Naive thymus-derived CD4-positive, alpha-beta T cell (primary cell): ENCODE measurements at regions of chr9 and their contacts with region 1.

Region 1: DNA sequence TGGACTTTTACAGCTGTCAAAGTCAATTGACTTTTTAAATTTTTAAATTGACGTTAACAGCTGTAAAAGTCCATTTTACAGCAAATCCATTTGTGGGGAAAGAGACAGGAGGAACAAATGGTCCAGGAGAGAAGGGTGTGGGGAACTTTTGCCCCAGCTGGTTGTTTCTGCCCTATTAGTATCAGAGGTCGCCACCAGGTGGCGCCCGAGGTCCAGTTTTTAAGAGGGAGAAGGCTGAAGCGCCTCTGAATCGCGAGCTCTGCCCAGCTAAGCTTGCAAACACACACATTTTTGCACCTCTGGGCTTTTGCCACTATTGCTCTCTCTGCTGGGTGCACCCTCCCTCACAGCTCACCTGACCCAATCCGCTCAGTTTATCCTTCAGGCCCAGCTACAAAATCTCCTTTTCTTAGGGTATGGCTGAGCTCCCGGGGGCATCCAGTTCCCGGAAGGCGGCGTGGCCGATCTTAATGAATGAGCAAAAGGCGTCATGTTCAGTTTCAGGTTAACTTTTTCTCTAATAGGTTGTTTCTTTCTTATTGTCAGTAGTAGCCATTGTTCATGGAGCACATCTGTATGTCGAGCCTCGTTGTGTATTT is 6.3 kb upstream of the TTLL11 start:
- DNase-seq: peak; percentile 54 to 79 (median 71)
- ATAC-seq: peak; percentile 86
- H3K4me3 ChIP-seq: no peak overlapping the region
- H3K4me3 Mint-ChIP-seq: peak overlapping the region in 7 of 10 donors; percentile 10 to 80 (median 48)
- H3K27ac ChIP-seq: no peak overlapping the region
- H3K27ac Mint-ChIP-seq: no peak overlapping the region
- H3K4me1 ChIP-seq: peaks cover 0 to 11% of the 10 kb centered on the region in 2 donors
- H3K4me1 Mint-ChIP-seq: peaks cover 7 to 19% (median 11%) of the 10 kb centered on the region in 7 donors
- H3K27me3 ChIP-seq: no peaks in the 10 kb centered on the region
- H3K27me3 Mint-ChIP-seq: peaks cover 0 to 29% (median 6%) of the 10 kb centered on the region in 5 donors

Region 2: GRCh38 chr9:121725008-121725775 is 374.2 kb before region 1 on chr9:
- CTCF ChIA-PET with region 1: no interaction called
- POLR2A ChIA-PET with region 1: no interaction called
- intact Hi-C with region 1: no loop called
- DNase-seq: no peak
- ATAC-seq: no peak
- H3K4me3 ChIP-seq: no peak overlapping the region
- H3K4me3 Mint-ChIP-seq: no peak overlapping the region
- H3K27ac ChIP-seq: no peak overlapping the region
- H3K27ac Mint-ChIP-seq: no peak overlapping the region
- H3K4me1 ChIP-seq: no peaks in the 10 kb centered on the region
- H3K4me1 Mint-ChIP-seq: peaks cover 0 to 5% (median 0%) of the 10 kb centered on the region in 7 donors
- H3K27me3 ChIP-seq: no peaks in the 10 kb centered on the region
- H3K27me3 Mint-ChIP-seq: peaks cover 0 to 7% (median 0%) of the 10 kb centered on the region in 5 donors

Region 3: GRCh38 chr9:122087406-122088200 is 11.8 kb before region 1 on chr9:
- CTCF ChIA-PET with region 1: interaction called, 10 read pairs
- POLR2A ChIA-PET with region 1: no interaction called
- intact Hi-C with region 1: no loop called
- DNase-seq: no peak
- ATAC-seq: no peak
- H3K4me3 ChIP-seq: no peak overlapping the region
- H3K4me3 Mint-ChIP-seq: no peak overlapping the region
- H3K27ac ChIP-seq: no peak overlapping the region
- H3K27ac Mint-ChIP-seq: peak overlapping the region in 1 of 9 donors; percentile 48
- H3K4me1 ChIP-seq: peaks cover 10 to 20% of the 10 kb centered on the region in 2 donors
- H3K4me1 Mint-ChIP-seq: peaks cover 22 to 49% (median 31%) of the 10 kb centered on the region in 7 donors
- H3K27me3 ChIP-seq: no peaks in the 10 kb centered on the region
- H3K27me3 Mint-ChIP-seq: no peaks in the 10 kb centered on the region

Region 4: DNA sequence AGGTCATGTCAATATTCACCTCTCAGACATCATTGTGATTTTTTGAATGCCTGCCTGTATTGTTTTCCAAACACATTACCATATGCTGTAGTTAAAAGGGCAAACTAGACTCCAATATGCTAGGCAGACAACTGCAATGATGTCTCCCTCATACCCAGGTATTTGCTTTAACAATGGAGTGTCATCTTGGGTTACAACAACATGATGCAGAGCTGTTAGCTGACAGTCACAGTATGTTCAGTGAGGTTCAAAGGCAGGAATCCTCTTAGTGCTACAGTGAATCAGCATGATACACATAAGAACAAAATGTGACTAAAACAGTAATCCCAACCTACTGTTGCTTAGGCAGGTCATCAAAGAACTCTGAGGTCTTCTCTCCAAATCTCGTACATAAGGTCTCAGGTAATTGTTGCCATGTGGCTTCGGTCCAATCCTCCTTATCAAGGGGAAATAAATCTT is 354.3 kb after region 1 on chr9:
- CTCF ChIA-PET with region 1: no interaction called
- POLR2A ChIA-PET with region 1: no interaction called
- intact Hi-C with region 1: loop called in 1 of 2 experiments (anchors 2 kb)
- DNase-seq: no peak
- ATAC-seq: no peak
- H3K4me3 ChIP-seq: no peak overlapping the region
- H3K4me3 Mint-ChIP-seq: no peak overlapping the region
- H3K27ac ChIP-seq: no peak overlapping the region
- H3K27ac Mint-ChIP-seq: no peak overlapping the region
- H3K4me1 ChIP-seq: no peaks in the 10 kb centered on the region
- H3K4me1 Mint-ChIP-seq: no peaks in the 10 kb centered on the region
- H3K27me3 ChIP-seq: no peaks in the 10 kb centered on the region
- H3K27me3 Mint-ChIP-seq: peaks cover 0 to 26% (median 18%) of the 10 kb centered on the region in 5 donors

Region 5: DNA sequence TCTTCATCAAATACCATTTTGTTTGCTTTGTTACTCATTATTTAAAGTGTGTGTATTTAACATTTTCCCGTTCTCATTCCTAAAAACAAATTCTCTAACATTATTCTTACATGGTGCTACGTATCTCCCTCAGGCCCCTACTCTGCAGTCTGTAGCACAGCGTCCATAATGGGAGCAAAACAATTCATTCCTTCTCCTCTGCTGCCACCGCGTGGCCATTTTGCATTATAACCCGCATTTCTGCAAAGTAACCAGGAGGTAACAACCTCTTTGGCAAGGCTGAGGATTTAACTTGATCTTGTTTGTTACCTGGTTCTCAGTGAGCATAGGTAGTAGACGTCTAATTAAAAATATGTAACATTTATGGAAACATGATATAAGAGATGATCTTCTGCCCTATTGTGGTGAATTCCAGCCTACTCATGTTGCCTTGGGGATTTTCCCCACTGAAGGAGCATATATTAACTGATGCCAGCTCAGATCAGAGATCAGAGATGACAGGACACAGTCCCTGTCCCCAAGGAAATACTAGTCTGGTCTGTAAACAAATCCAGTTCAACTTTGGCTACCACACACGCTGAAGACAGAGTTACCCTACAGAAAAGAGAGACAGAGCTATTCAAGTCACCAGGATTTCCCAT is 711.1 kb after region 1 on chr9:
- CTCF ChIA-PET with region 1: interaction called, 10 read pairs
- POLR2A ChIA-PET with region 1: interaction called, 3 read pairs
- intact Hi-C with region 1: loop called (anchors 1 kb)
- DNase-seq: peak; percentile 52 to 79 (median 72)
- ATAC-seq: peak; percentile 95
- H3K4me3 ChIP-seq: no peak overlapping the region
- H3K4me3 Mint-ChIP-seq: no peak overlapping the region
- H3K27ac ChIP-seq: no peak overlapping the region
- H3K27ac Mint-ChIP-seq: no peak overlapping the region
- H3K4me1 ChIP-seq: peaks cover 0 to under 1% of the 10 kb centered on the region in 2 donors
- H3K4me1 Mint-ChIP-seq: peaks cover 9 to 24% (median 16%) of the 10 kb centered on the region in 7 donors
- H3K27me3 ChIP-seq: no peaks in the 10 kb centered on the region
- H3K27me3 Mint-ChIP-seq: no peaks in the 10 kb centered on the region